AG04449 (cell line): ENCODE measurements at regions of chr19 and their contacts with region 1.

Region 1: DNA sequence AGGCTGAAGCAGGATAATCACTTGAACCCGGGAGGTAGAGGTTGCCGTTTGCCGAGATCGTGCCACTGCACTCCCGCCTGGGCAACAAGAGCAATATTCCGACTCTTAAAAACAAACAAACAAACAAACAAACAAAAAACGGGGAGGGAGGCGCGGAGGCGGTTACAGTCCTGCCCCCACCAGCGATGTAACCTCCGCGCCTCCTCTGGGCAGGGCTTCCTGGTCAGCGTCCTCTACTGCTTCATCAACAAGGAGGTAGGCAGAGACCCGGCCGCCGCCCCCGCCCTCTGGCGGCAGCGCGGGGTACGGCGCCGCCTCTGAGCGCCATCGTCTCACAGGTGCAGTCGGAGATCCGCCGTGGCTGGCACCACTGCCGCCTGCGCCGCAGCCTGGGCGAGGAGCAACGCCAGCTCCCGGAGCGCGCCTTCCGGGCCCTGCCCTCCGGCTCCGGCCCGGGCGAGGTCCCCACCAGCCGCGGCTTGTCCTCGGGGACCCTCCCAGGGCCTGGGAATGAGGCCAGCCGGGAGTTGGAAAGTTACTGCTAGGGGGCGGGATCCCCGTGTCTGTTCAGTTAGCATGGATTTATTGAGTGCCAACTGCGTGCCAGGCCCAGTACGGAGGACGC is 10.2 kb downstream of the SNRPD2 start:
- DNase-seq: no peak
- H3K4me3 ChIP-seq: peak overlapping the region; percentile 43
- CTCF ChIP-seq: peak; percentile 95

Region 2: GRCh38 chr19:45467456-45468158 is 213.9 kb before region 1 on chr19 and contains the start of gene FOSB:
- CTCF ChIA-PET with region 1: no interaction called
- POLR2A ChIA-PET with region 1: no interaction called
- DNase-seq: no peak
- H3K4me3 ChIP-seq: peak within 1 kb of the TSS; percentile 95
- CTCF ChIP-seq: no peak

Region 3: GRCh38 chr19:45569619-45570421 is 111.7 kb before region 1 on chr19:
- CTCF ChIA-PET with region 1: no interaction called
- POLR2A ChIA-PET with region 1: no interaction called
- DNase-seq: no peak
- H3K4me3 ChIP-seq: no peak overlapping the region
- CTCF ChIP-seq: peak; percentile 88

Region 4: GRCh38 chr19:45670670-45671453 is 10.6 kb before region 1 on chr19:
- CTCF ChIA-PET with region 1: interaction called, 25 read pairs
- POLR2A ChIA-PET with region 1: interaction called, 5 read pairs
- DNase-seq: no peak
- H3K4me3 ChIP-seq: no peak overlapping the region; the same call in 1 of the 2 replicates
- CTCF ChIP-seq: no peak